Activated CD4-positive, alpha-beta memory T cell treated with anti-CD3 and anti-CD28 coated beads for 36 hours (primary cell): ENCODE measurements at regions of chr6 and their contacts with region 1.

Region 1: DNA sequence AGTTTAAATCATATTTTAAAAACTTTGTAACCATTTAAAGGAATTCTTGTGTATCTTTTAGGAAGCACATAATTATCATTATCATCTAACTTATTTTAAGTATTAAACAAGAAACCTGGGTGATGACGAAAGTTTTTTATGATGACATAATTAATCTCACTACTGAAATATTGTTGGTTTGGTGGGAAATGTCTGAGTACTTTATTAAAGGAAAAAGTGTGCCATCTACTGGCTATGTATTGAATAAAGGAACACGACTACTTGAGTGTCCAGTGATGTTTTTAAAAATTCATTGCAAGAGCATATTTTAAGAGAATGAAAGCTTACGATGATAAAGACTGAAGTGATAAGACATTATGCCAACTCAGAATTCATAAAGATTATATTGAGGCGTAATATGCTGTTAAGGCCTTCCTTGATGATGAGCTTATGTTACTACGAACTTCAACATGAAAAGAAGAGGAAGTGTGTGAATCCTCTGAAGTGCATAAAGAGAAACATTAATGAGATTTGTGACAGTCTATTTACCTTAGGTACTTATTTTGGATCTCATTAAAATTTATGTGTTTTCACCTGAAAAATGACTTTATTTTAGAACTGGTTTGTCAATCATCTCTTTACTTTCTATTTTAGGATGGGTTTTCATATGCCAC is 12.0 kb upstream of the TRMT11 start:
- DNase-seq: no peak
- H3K4me3 Mint-ChIP-seq: no peak overlapping the region
- H3K27ac Mint-ChIP-seq: no peak overlapping the region
- H3K4me1 Mint-ChIP-seq: peaks cover 4% of the 10 kb centered on the region
- H3K27me3 Mint-ChIP-seq: no peaks in the 10 kb centered on the region

Region 2: GRCh38 chr6:125858427-125859320 is 115.7 kb before region 1 on chr6:
- CTCF ChIA-PET with region 1: interaction called, 5 read pairs
- POLR2A ChIA-PET with region 1: no interaction called
- intact Hi-C with region 1: loop called (anchors 2 kb)
- DNase-seq: peak; percentile 48
- H3K4me3 Mint-ChIP-seq: no peak overlapping the region
- H3K27ac Mint-ChIP-seq: no peak overlapping the region
- H3K4me1 Mint-ChIP-seq: peaks cover 11% of the 10 kb centered on the region
- H3K27me3 Mint-ChIP-seq: no peaks in the 10 kb centered on the region

Region 3: DNA sequence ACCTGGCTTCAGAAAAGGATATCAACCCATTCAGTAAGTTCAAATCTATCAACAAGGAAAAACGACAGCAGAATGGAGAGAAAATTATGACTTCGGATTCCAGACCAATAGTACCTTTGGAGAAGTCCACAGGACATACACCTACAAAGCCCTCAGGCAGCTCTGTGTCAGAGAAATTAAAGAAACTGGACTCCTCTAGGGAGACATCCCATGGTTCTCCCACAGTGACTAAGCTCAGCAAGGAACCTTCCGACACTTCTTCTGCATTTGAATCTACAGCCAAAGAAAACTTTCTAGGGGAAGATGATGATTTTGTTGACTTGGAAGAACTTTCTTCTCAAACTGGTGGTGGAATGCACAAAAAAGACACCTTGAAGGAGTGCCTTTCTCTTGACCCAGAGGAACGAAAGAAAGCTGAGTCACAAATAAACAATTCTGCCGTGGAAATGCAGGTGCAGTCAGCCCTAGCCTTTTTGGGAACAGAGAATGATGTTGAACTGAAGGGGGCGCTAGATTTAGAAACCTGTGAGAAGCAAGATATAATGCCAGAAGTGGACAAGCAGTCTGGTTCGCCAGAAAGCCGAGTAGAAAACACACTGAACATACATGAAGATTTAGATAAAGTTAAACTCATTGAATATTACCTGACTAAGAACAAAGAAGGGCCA is 85.2 kb before region 1 on chr6:
- CTCF ChIA-PET with region 1: interaction called, 14 read pairs
- POLR2A ChIA-PET with region 1: no interaction called
- intact Hi-C with region 1: no loop called
- DNase-seq: peak; percentile 26
- H3K4me3 Mint-ChIP-seq: no peak overlapping the region
- H3K27ac Mint-ChIP-seq: no peak overlapping the region
- H3K4me1 Mint-ChIP-seq: no peaks in the 10 kb centered on the region
- H3K27me3 Mint-ChIP-seq: no peaks in the 10 kb centered on the region